ENCODE measurements at regions of chr3 and their contacts with region 1.

Region 1: GRCh38 chr3:39406368-39407258 is at the start of gene RPSA:
- DNase-seq: peak; percentile 94 to 96
- ATAC-seq: peak; percentile 97
- H3K4me3 ChIP-seq: peak within 1 kb of the TSS; percentile 75 to 89
- H3K27ac ChIP-seq: peak within 1 kb of the TSS in 1 of 2 donors; percentile 44
- H3K4me1 ChIP-seq: peaks cover 0 to 6% of the 10 kb centered on the region in 2 donors
- H3K27me3 ChIP-seq: no peaks in the 10 kb centered on the region
- total RNA-seq, gene RPSA: 479 to 672 TPM

Region 2: DNA sequence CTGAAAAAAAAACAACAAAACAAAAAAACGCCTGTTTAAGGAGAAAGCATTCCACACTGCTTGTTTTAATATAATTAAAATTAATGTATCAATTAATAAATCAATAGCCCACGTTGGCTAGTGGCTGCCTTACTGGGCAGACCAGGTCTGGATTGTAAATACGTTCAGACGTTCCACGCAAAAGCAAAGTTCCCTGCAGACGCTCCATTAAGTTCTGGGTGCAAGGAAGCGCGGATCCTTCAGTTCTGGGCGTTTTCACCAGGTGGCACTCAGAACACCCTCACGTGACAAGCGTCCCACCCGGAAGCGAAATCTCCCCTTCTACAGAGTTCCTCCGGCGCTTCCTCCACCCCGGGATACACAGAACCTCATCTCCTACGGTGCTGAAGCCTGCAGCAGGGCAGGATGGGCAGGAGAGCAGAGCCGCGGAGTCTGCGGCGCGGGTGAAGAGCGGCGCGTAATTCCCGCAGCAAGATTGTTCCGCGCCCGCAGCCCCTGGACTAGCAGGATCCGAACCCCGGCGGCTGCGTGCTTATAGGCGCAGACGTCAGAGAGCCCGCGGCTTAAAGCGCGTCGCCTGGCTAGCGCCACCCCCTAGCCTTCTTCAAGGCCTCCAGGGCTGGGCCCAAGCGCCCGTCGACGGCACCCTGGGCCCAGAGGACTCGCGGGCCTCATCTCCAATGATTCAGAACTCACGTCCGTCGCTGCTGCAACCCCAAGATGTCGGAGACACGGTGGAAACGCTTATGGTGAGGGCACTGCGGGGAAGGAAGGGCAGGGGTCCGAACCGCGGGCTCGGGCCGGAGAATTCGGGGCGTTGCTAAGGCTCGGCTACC is 23.4 kb before region 1 on chr3 and contains the start of gene SLC25A38:
- intact Hi-C with region 1: loop called in 1 of 2 experiments (anchors 2 kb)
- DNase-seq: peak; percentile 89 to 90
- ATAC-seq: peak; percentile 93
- H3K4me3 ChIP-seq: peak within 1 kb of the TSS; percentile 29 to 85
- H3K27ac ChIP-seq: peak within 1 kb of the TSS; percentile 84 to 95
- H3K4me1 ChIP-seq: peaks cover 0 to 3% of the 10 kb centered on the region in 2 donors
- H3K27me3 ChIP-seq: no peaks in the 10 kb centered on the region
- total RNA-seq, gene SLC25A38: 18.0 to 18.6 TPM

Region 3: DNA sequence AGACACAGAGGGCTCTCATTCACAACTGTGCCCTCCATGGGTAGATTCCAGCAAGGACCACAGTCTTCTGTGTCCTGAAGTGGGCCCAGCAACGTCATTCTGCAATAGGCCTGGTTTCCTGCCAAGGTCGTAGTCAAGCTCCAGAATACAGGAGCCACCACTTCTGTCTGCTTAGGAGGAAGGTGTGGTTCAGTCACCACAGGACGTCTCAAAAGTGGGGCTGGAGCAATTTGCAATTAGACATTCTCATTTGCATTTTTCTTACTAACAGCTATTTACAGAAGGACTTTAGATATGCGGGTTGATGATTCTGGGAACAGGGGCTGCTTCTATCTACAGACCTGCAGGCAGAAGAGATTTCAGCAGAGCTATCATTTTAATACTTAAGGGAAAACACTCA is 344.1 kb after region 1 on chr3:
- intact Hi-C with region 1: no loop called
- DNase-seq: no peak
- ATAC-seq: no peak
- H3K4me3 ChIP-seq: no peak overlapping the region
- H3K27ac ChIP-seq: no peak overlapping the region
- H3K4me1 ChIP-seq: no peaks in the 10 kb centered on the region
- H3K27me3 ChIP-seq: peaks cover 0 to 2% of the 10 kb centered on the region in 2 donors